ENCODE measurements at regions of chr5 and their contacts with region 1.

Region 1: GRCh38 chr5:144203750-144204596 is 33.3 kb downstream of the KCTD16 start:
- DNase-seq: peak; percentile 12
- H3K4me3 ChIP-seq: no peak overlapping the region
- H3K27ac ChIP-seq: no peak overlapping the region
- H3K4me1 ChIP-seq: peaks cover 0 to 10% (median 5%) of the 10 kb centered on the region in 4 donors
- H3K27me3 ChIP-seq: peaks cover 36% of the 10 kb centered on the region
- CTCF ChIP-seq: peak; percentile 79 to 88 (median 81)
- EP300 ChIP-seq: no peak
- POLR2A ChIP-seq: no peak

Region 2: DNA sequence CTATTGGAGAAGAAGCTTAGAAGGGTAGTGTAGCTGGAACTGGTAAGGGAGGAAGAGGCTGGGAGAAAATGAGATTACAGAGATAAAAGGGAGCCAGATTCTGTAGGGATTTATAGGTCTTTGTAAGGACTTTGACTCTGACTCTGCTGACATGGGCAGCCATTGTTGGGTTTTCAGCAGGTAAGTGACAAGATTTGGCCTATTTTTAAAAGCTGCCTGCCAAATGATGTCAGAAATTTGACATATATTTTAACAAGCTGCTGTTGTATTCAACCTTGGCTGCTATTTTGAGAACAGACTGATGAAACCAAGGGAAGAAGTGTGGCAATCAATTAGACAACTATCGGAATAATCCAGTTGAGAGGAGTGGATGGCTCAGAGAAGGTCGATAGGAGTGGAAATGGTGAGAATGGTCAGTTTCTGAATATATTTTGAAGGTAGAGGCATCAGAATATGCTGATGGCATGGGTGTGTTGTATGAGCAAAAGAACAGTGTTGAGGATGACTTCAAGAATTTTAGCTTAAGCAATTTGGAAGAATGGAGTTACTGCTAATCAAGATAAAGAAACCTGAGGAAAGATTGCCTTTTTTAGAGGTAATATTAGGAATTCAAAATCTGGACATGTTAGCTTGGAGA is 23.5 kb after region 1 on chr5:
- in situ Hi-C with region 1: no loop called
- intact Hi-C with region 1: no loop called
- DNase-seq: no peak
- H3K4me3 ChIP-seq: no peak overlapping the region
- H3K27ac ChIP-seq: no peak overlapping the region
- H3K4me1 ChIP-seq: no peaks in the 10 kb centered on the region
- H3K27me3 ChIP-seq: no peaks in the 10 kb centered on the region
- CTCF ChIP-seq: no peak
- EP300 ChIP-seq: no peak
- POLR2A ChIP-seq: no peak

Region 3: GRCh38 chr5:144247131-144247530 is 43.2 kb after region 1 on chr5:
- in situ Hi-C with region 1: no loop called
- intact Hi-C with region 1: no loop called
- DNase-seq: no peak
- H3K4me3 ChIP-seq: no peak overlapping the region
- H3K27ac ChIP-seq: no peak overlapping the region
- H3K4me1 ChIP-seq: no peaks in the 10 kb centered on the region
- H3K27me3 ChIP-seq: peaks cover 5% of the 10 kb centered on the region
- CTCF ChIP-seq: no peak
- EP300 ChIP-seq: no peak
- POLR2A ChIP-seq: no peak

Region 4: DNA sequence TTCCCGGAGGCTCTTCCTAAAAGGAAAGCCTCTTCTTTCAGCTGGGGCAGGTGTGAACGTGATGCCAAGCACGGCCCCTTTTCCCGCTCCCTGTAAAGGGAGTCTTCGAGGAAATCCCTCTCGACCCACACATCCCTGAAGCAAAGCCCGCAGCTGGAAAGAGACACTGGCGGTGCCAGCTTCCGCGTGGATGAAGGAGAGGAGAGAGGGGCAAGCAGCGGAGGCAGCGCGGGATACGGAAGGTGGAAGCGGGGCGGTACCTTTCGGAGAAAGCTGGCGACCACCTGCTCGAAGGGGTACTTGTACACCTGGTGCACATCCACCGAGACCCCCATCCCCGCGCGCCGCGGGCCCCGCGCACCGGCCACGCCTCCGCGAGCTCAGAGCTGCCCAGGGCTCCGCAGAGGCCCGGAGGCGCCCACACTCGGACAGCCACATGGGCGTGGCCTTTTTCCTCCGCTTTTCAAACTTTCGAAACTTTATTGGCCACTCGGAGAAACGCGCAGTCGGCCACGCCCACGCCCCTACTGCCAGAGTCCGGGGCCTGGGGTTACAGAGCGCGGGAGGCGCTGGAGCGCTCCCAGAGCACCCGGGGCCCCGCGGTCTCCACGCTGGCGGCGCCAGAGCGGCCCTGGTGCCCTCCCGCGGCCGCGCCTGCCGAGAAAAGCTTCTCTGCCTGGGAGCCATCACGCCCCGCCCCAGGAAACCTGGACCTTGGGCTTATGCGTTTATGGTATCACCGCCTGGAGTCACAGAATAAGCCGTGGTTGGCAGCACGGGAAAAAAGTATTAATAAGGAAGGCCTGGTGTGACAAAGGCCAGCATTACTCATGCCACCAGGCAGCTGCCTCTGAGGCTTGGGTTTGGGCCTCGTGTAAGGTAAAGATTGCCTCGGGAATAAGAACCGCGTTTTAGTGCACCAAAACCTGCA is 1631.2 kb after region 1 on chr5 and contains the start of gene PRELID2:
- in situ Hi-C with region 1: loop called in 1 of 4 experiments (anchors 25 kb)
- intact Hi-C with region 1: no loop called
- DNase-seq: peak; percentile 94
- H3K4me3 ChIP-seq: peak within 1 kb of the TSS; percentile 58 to 73 (median 68)
- H3K27ac ChIP-seq: peak within 1 kb of the TSS; percentile 86 to 90 (median 88)
- H3K4me1 ChIP-seq: peaks cover 0 to 42% (median 19%) of the 10 kb centered on the region in 4 donors
- H3K27me3 ChIP-seq: no peaks in the 10 kb centered on the region
- CTCF ChIP-seq: peak in 1 of 5 experiments; percentile 31
- EP300 ChIP-seq: no peak
- POLR2A ChIP-seq: peak; percentile 77
- total RNA-seq, gene PRELID2: 23.9 to 143 (median 106) TPM